WTC11 (cell line): ENCODE measurements at regions of chr14 and their contacts with region 1.

Region 1: GRCh38 chr14:73728717-73729330 is 14.6 kb upstream of the PNMA1 start:
- DNase-seq: peak; percentile 93
- ATAC-seq: peak; percentile 93
- H3K4me3 Mint-ChIP-seq: no peak overlapping the region
- H3K27ac Mint-ChIP-seq: peak overlapping the region; percentile 91
- H3K4me1 Mint-ChIP-seq: peaks cover 19% of the 10 kb centered on the region
- H3K27me3 Mint-ChIP-seq: no peaks in the 10 kb centered on the region
- CTCF ChIP-seq: peak; percentile 77

Region 2: DNA sequence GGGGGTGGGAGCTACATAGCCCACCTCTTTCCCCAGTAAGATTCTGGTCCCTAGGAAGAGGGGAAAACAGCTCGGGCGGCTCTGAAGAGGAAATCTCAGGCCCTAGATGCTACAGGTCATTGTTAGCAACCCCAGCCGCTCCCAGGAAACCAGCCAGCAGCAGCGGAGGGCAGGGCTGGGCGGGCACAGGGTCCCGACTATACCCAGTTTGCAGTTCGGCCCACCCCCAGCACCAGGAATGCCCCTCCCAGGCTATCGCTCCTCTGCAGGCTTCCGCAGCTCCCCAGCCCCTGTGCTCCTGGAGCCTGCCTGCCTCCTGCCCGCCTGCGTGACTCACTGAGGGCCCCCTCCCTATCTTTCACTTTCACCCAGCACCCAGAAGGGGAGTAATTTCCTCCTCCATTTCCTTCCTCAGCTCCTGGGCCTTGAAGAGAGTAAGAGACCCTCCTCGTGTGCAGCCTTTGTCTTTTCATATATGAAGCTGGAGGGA is 12.6 kb after region 1 on chr14:
- CTCF ChIA-PET with region 1: interaction called, 74 read pairs
- POLR2A ChIA-PET with region 1: no interaction called
- DNase-seq: peak; percentile 69
- ATAC-seq: peak; percentile 87
- H3K4me3 Mint-ChIP-seq: peak overlapping the region; percentile 41
- H3K27ac Mint-ChIP-seq: peak overlapping the region; percentile 94
- H3K4me1 Mint-ChIP-seq: peaks cover 48% of the 10 kb centered on the region
- H3K27me3 Mint-ChIP-seq: no peaks in the 10 kb centered on the region
- CTCF ChIP-seq: no peak

Region 3: GRCh38 chr14:73753959-73754882 is 25.4 kb after region 1 on chr14:
- CTCF ChIA-PET with region 1: interaction called, 128 read pairs
- POLR2A ChIA-PET with region 1: interaction called, 12 read pairs
- DNase-seq: no peak
- ATAC-seq: no peak
- H3K4me3 Mint-ChIP-seq: no peak overlapping the region
- H3K27ac Mint-ChIP-seq: peak overlapping the region; percentile 45; the same call in 1 of the 2 replicates
- H3K4me1 Mint-ChIP-seq: peaks cover 72% of the 10 kb centered on the region
- H3K27me3 Mint-ChIP-seq: peaks cover 12% of the 10 kb centered on the region
- CTCF ChIP-seq: no peak

Region 4: GRCh38 chr14:73785873-73786695 is 57.3 kb after region 1 on chr14:
- CTCF ChIA-PET with region 1: interaction called, 14 read pairs
- POLR2A ChIA-PET with region 1: interaction called, 4 read pairs
- DNase-seq: peak; percentile 50
- ATAC-seq: peak; percentile 8
- H3K4me3 Mint-ChIP-seq: peak overlapping the region; percentile 90
- H3K27ac Mint-ChIP-seq: peak overlapping the region; percentile 63
- H3K4me1 Mint-ChIP-seq: peaks cover 43% of the 10 kb centered on the region
- H3K27me3 Mint-ChIP-seq: peaks cover 86% of the 10 kb centered on the region
- CTCF ChIP-seq: no peak

Region 5: DNA sequence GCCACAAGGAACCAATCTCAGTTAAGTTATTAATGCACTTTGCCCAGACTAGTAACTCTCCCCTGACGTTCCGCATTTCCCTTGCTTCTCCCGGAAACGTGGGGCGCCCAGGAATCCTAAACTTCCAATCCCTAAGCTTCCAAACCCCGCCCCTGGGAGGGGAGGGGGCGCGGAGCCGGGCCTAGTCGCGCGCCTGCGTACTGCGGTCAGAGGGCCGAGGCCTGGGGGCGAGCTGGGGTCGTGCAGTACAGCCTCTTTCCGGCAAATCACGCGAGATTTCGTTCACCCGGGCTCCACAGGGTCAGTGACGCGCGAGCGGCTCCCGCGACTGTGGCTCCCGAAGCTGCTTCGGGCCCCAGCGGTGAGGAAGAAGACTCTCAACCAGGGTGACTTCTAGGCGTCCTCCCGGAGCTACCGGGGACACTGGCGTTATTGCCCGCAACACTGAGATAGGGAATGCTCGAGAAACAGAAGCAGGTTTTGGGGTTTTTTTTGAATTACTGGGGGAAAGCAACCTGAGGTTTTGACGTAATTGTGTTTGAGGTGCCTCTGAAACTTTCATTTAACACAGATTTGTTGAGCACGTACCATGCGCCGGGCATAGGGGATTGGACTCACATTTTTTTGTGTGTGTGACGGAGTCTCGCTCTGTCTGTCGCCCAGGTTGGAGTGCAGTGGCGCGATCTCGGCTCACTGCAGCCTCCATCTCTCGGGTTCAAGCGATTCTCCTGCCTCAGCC is 123.0 kb after region 1 on chr14 and contains the start of gene PTGR2:
- CTCF ChIA-PET with region 1: interaction called, 15 read pairs
- POLR2A ChIA-PET with region 1: no interaction called
- DNase-seq: peak; percentile 98
- ATAC-seq: peak; percentile 97
- H3K4me3 Mint-ChIP-seq: peak within 1 kb of the TSS; percentile 98
- H3K27ac Mint-ChIP-seq: peak within 1 kb of the TSS; percentile 100
- H3K4me1 Mint-ChIP-seq: peaks cover 22% of the 10 kb centered on the region
- H3K27me3 Mint-ChIP-seq: no peaks in the 10 kb centered on the region
- CTCF ChIP-seq: no peak
- total RNA-seq, gene PTGR2: 20.7 to 23.6 TPM (median 22.1 TPM) in 3 replicates

Region 6: GRCh38 chr14:73924337-73924736 is 195.5 kb after region 1 on chr14:
- CTCF ChIA-PET with region 1: no interaction called
- POLR2A ChIA-PET with region 1: no interaction called
- DNase-seq: no peak
- ATAC-seq: no peak
- H3K4me3 Mint-ChIP-seq: no peak overlapping the region
- H3K27ac Mint-ChIP-seq: no peak overlapping the region
- H3K4me1 Mint-ChIP-seq: no peaks in the 10 kb centered on the region
- H3K27me3 Mint-ChIP-seq: no peaks in the 10 kb centered on the region
- CTCF ChIP-seq: no peak